ENCODE measurements at regions of chr9 and their contacts with region 1.

Region 1: DNA sequence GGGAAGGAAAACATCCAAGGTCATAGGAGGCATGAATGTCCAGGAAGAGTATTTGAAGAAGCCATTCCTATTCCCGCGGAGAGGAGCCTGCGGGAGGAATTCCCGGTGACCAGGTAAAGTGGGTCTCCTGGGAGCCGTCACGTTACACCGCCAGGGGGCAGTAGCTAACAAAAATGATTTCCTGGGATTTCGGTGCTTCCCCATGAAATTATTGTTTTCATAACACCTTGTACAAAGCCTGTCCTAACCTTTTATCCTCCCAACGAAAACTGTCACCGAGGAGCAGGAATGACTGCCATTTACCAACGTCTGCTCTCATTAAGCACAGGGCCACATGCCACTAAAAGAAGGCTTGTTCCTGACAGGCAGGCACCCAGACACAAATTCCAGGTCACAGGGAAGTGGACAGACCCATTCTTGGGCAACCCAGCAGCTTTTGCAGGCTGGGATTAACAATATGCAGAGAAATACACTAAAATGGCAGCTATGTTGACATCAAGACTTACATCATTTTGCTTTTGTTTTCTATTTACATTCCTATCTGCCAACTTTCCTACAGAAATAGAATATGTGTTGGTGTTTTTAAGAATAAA is 41.2 kb upstream of the CTSL start:
- DNase-seq: peak; percentile 59 to 73
- H3K4me3 ChIP-seq: no peak overlapping the region
- H3K27ac ChIP-seq: peak overlapping the region in 2 of 5 donors; percentile 24 to 34
- H3K4me1 ChIP-seq: peaks cover 0 to 23% (median 7%) of the 10 kb centered on the region in 4 donors
- H3K27me3 ChIP-seq: no peaks in the 10 kb centered on the region
- CTCF ChIP-seq: peak in 5 of 7 experiments; percentile 11 to 73 (median 58)
- EP300 ChIP-seq: no peak
- POLR2A ChIP-seq: no peak

Region 2: GRCh38 chr9:87812375-87813118 is 127.8 kb after region 1 on chr9:
- intact Hi-C with region 1: loop called (anchors 10 kb)
- DNase-seq: peak in 1 of 2 donors; percentile 27
- H3K4me3 ChIP-seq: no peak overlapping the region
- H3K27ac ChIP-seq: no peak overlapping the region
- H3K4me1 ChIP-seq: no peaks in the 10 kb centered on the region
- H3K27me3 ChIP-seq: peaks cover 0 to 4% (median 0%) of the 10 kb centered on the region in 3 donors
- CTCF ChIP-seq: peak in 5 of 7 experiments; percentile 58 to 74 (median 67)
- EP300 ChIP-seq: no peak
- POLR2A ChIP-seq: no peak